Ovary (tissue), 10 donors: ENCODE measurements at regions of chr6 and their contacts with region 1.

Region 1: DNA sequence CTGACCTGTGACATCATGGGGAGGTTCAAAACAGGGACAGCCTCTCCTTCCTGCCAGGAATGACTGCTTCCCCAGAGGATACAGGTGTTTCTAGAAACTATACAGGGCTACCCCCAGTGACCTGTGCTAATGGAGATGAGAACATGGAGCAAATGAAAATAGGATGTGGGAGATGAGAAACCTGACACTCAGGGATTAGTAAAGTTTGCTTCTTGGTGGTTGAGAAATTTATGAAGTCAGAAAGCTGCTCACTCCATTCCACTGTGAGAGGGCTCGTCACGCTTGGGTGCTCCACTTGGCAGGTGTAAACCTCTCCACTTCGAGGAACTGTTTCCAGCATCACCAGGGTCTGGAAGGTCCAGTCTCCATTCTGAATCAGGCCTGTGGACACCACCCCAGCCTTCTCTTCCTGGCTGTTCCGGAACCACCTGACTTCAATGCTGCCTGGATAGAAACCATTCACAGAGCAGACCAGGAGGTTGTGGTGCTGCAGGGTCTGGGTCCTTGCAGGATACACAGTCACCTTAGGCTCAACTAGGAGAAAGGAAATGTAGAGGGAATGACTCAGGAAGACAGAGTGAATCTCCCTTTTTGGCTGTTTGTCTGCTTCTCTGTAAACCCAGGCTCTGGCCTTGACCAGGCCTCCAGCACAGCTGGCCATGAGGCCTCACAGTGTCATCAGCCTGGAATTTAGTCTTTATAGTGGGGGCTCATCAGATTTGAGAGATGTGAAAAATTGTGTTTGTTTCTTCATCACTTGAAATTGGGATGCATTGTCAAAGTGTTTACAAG is 10.8 kb downstream of the HLA-DRB5 start:
- DNase-seq: peak in 1 of 5 donors; percentile 18
- H3K4me3 ChIP-seq: no peak overlapping the region
- H3K27ac ChIP-seq: no peak overlapping the region
- H3K4me1 ChIP-seq: no peaks in the 10 kb centered on the region
- H3K27me3 ChIP-seq: no peaks in the 10 kb centered on the region
- CTCF ChIP-seq: no peak
- EP300 ChIP-seq: no peak
- POLR2A ChIP-seq: no peak

Region 2: GRCh38 chr6:32501016-32501415 is 18.3 kb before region 1 on chr6:
- intact Hi-C with region 1: no loop called
- DNase-seq: no peak
- H3K4me3 ChIP-seq: no peak overlapping the region
- H3K27ac ChIP-seq: no peak overlapping the region
- H3K4me1 ChIP-seq: no peaks in the 10 kb centered on the region
- H3K27me3 ChIP-seq: no peaks in the 10 kb centered on the region
- CTCF ChIP-seq: no peak
- EP300 ChIP-seq: no peak
- POLR2A ChIP-seq: no peak

Region 3: GRCh38 chr6:32576250-32576649 is 56.9 kb after region 1 on chr6:
- intact Hi-C with region 1: loop called in 1 of 4 experiments (anchors 10 kb)
- DNase-seq: no peak
- H3K4me3 ChIP-seq: no peak overlapping the region
- H3K27ac ChIP-seq: no peak overlapping the region
- H3K4me1 ChIP-seq: no peaks in the 10 kb centered on the region
- H3K27me3 ChIP-seq: no peaks in the 10 kb centered on the region
- CTCF ChIP-seq: no peak
- EP300 ChIP-seq: no peak
- POLR2A ChIP-seq: no peak